ENCODE measurements at regions of chr3 and their contacts with region 1.

Region 1: DNA sequence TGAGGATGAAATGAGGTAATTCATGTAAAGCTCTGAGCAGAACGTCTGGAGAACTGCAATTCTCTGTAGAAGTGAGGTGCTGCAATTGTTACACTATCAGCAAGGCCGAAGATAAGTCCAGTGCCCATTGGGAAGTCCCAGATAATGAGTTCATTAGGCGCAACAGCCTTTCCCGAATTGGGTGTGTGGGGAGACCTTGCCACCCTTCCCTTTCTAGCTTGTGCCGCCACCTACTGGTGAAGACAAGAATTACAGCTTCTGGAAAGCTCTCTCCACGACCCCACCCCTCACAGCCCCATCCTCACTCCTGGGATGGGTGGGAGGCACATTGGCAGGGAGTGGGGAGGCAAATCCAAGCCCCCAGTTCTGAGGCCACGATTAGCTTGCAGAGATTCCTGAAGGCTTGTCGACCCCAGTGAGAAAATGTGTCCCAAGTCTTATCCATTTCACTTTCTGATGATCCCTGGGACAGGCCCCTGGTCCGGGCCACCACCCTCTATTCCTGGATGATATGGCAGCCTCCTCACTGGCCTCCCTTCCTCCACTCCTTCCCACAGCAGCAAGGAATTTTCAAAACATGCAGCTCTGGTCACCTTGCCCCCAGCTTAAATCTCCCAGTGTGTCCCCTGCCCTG is 36.4 kb downstream of the FAM3D start:
- DNase-seq: peak; percentile 60
- H3K4me3 ChIP-seq: no peak overlapping the region
- H3K27ac ChIP-seq: no peak overlapping the region
- H3K4me1 ChIP-seq: no peaks in the 10 kb centered on the region
- CTCF ChIP-seq: peak; percentile 89

Region 2: GRCh38 chr3:58366699-58367098 is 263.5 kb before region 1 on chr3:
- CTCF ChIA-PET with region 1: no interaction called
- POLR2A ChIA-PET with region 1: no interaction called
- intact Hi-C with region 1: no loop called
- DNase-seq: no peak
- H3K4me3 ChIP-seq: no peak overlapping the region
- H3K27ac ChIP-seq: no peak overlapping the region
- H3K4me1 ChIP-seq: peaks cover 19% of the 10 kb centered on the region
- CTCF ChIP-seq: no peak

Region 3: DNA sequence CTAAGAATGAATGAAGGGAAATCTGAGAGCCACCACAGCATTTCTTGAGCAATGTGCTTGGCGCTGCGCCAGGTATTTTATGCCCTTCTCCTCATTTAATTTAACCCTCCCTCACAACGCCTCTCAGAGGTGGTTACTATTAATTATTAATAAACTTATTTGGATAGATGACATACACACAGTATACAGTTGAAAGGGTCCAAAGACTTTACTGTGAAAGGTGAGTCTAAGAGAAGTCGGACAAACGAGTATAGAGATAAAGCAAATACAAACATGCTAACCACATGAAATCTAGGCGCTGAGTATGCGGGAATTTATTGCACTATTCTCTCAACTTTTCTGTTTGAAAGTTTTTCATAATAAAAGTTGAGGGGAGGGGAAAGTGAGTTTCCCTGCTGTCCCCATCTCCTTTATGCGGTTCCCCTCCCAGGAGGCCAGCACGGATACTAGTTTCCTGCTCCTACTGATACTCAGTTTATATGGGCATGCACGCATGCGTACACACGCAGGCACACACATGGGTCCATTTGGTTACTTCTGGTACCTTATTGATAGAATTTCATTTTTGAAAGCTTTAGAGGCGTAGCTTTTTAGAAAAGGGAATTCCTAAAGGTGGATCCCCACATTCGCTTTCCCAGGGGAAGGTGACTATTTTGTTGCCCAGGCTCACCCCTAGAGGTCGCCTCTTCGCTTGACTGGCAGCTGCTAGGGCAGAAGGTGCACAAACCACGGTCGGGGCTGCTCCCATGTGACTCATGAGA is 166.8 kb before region 1 on chr3:
- CTCF ChIA-PET with region 1: no interaction called
- POLR2A ChIA-PET with region 1: no interaction called
- intact Hi-C with region 1: loop called (anchors 10 kb)
- DNase-seq: peak; percentile 78
- H3K4me3 ChIP-seq: no peak overlapping the region
- H3K27ac ChIP-seq: no peak overlapping the region
- H3K4me1 ChIP-seq: peaks cover 5% of the 10 kb centered on the region
- CTCF ChIP-seq: peak; percentile 98

Region 4: DNA sequence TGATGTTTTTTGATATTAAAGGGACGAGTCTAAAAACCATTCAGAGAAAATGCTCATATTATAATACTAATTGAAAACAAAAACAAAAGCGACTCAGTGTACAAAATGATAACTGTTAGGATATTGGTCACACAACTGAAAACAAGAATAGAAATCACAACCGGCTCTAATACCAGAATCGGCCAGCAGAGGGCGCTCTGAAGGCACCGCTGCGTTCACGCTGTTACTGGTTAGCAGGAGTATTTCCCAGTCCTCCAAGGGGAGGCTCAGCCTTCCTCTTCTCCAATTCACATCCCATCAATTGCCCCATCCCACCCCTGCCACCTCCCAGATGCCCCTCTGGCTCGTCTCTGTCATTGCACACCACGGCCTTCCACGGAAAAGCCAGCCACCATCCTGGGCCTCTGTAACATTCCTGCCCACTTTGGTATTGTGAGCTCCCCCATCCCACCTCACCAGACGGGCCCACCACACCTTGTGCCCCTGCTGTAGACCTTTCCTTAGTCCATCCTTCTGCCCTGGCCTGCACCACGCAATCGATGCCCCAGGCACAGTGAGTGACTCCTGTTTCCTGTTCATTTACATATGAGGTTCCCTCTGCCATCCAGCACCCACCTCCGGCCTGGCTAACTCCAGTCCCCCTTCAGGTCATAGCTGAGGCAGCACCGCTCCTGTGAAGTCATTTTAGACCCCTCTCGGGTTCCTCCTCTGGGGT is 61.5 kb before region 1 on chr3:
- CTCF ChIA-PET with region 1: interaction called, 3 read pairs
- POLR2A ChIA-PET with region 1: no interaction called
- intact Hi-C with region 1: loop called (anchors 1 kb)
- DNase-seq: peak; percentile 65
- H3K4me3 ChIP-seq: peak overlapping the region; percentile 11
- H3K27ac ChIP-seq: no peak overlapping the region
- H3K4me1 ChIP-seq: peaks cover 15% of the 10 kb centered on the region
- CTCF ChIP-seq: peak; percentile 98